Activated T-helper 2 cell treated with anti-CD3 and anti-CD28 coated beads, Interferon-gamma antibody, Interleukin-2, Interleukin-4, amounts not matched to agents 10 μg/mL and 5 μg/mL and 100 μg/mL, durations not matched to agents 14 hours and 24 hours and 36 hours (primary cell): ENCODE measurements at regions of chr1 and their contacts with region 1.

Region 1: GRCh38 chr1:165928075-165928731 is 100.8 kb downstream of the UCK2 start:
- DNase-seq: peak; percentile 40
- H3K4me3 Mint-ChIP-seq: no peak overlapping the region
- H3K27ac Mint-ChIP-seq: no peak overlapping the region
- H3K4me1 Mint-ChIP-seq: peaks cover 14% of the 10 kb centered on the region
- H3K27me3 Mint-ChIP-seq: peaks cover 7% of the 10 kb centered on the region

Region 2: GRCh38 chr1:165942927-165943597 is 14.9 kb after region 1 on chr1:
- intact Hi-C with region 1: no loop called
- DNase-seq: no peak
- H3K4me3 Mint-ChIP-seq: no peak overlapping the region
- H3K27ac Mint-ChIP-seq: no peak overlapping the region
- H3K4me1 Mint-ChIP-seq: no peaks in the 10 kb centered on the region
- H3K27me3 Mint-ChIP-seq: peaks cover 8% of the 10 kb centered on the region

Region 3: DNA sequence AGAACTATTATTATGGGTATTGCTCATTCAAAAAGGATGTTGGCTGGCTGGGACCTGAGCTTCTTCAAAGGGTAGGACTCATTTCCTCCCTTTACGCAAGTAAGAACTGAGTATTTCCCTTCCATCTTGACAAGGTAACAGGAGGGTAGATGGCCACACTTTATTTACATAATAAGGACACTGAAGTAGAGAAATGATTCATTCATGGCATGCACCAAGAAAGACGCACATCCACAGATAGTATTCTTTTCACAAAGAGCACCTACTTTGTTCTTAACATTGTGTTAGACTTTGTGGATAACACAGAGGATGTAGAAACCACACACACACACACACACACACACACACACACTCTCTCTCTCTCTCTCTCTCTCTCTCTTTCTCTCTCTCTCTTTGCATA is 155.7 kb after region 1 on chr1:
- intact Hi-C with region 1: loop called (anchors 5 kb)
- DNase-seq: no peak
- H3K4me3 Mint-ChIP-seq: no peak overlapping the region
- H3K27ac Mint-ChIP-seq: peak overlapping the region; percentile 29
- H3K4me1 Mint-ChIP-seq: peaks cover 29% of the 10 kb centered on the region
- H3K27me3 Mint-ChIP-seq: no peaks in the 10 kb centered on the region

Region 4: GRCh38 chr1:166432655-166433054 is 504.5 kb after region 1 on chr1:
- intact Hi-C with region 1: loop called (anchors 2 kb)
- DNase-seq: no peak
- H3K4me3 Mint-ChIP-seq: no peak overlapping the region
- H3K27ac Mint-ChIP-seq: no peak overlapping the region
- H3K4me1 Mint-ChIP-seq: no peaks in the 10 kb centered on the region
- H3K27me3 Mint-ChIP-seq: no peaks in the 10 kb centered on the region

Region 5: DNA sequence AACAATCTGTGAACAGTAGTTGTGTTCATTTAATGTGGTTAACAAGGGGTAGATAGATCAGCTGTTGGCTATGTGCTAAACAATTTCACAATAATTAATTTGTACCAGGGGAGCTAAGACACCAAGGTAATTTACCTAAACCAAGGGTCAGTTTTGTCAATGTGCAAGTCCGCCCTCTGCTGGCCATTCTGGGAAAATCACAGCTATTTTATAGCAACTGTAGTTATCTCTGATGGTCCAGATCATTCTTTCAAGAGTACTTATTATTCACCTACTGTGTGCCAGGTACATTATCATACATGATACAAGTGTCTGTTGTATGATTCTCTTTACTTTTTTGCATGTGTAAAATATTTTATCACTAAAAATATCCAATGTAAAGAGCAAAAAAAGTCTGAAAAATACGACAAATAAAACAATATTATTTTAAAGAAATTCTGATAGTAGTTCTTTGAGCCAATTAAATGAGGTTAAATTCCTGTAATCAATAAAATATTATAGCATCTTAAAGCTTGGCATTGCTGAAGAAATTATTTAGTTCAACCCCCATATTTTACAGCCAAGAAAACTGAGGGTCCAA is 550.9 kb after region 1 on chr1:
- intact Hi-C with region 1: loop called (anchors 2 kb)
- DNase-seq: peak; percentile 24
- H3K4me3 Mint-ChIP-seq: no peak overlapping the region
- H3K27ac Mint-ChIP-seq: no peak overlapping the region
- H3K4me1 Mint-ChIP-seq: peaks cover 1% of the 10 kb centered on the region
- H3K27me3 Mint-ChIP-seq: peaks cover 8% of the 10 kb centered on the region